ENCODE measurements at regions of chr3 and their contacts with region 1.

Region 1: DNA sequence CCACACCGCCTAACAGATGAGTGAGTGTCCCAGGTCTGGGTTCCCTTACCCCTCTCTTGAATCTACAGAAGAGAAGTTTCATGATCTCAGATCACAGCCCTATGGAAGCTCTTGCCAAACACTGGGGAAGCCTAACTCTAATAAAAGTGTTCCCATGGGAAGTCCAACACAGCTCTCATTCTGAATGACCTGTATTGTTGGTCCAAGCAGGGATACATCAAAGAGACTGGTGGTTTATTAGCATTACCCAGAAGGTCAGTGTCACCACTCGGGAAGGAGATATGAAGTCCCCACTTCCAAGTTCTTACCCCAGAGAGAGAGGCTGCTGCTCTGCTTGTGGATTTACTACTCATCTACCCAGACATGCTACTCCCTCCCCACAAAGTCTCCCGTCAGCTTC is 9.0 kb upstream of the NCBP2 start:
- DNase-seq: no peak
- H3K4me3 ChIP-seq: no peak overlapping the region
- H3K27ac ChIP-seq: no peak overlapping the region
- H3K4me1 ChIP-seq: no peaks in the 10 kb centered on the region
- H3K27me3 ChIP-seq: no peaks in the 10 kb centered on the region
- CTCF ChIP-seq: no peak
- EP300 ChIP-seq: no peak
- POLR2A ChIP-seq: no peak

Region 2: DNA sequence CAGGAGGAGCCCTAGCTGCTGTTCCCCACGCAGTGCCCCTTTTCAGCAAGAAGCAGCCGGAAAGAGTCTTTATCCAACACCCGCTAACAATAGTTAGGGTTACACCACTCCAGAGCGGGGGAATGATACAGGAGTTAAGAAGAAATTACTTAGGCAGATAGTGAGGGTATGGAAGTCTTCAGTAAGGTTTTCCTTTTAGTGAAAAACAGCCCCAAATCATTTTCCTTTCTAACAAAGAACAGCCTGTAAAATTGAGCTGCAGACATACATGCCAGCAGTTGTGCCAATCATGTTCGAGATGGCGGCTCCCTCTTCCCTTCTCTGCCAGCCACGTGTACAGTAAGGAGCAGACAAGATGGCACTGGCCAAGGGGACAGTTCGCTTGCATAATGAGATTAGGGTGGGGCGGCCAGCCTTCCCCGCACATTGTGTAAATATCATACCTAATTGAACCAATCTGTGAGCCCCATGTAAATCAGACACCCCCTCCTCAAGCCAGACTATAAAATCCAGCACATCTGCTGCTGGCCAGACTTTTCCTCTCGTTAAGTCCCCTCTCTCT is 102.1 kb before region 1 on chr3:
- in situ Hi-C with region 1: loop called in 2 of 4 experiments (anchors 10 to 25 kb)
- intact Hi-C with region 1: no loop called
- DNase-seq: no peak
- H3K4me3 ChIP-seq: no peak overlapping the region
- H3K27ac ChIP-seq: no peak overlapping the region
- H3K4me1 ChIP-seq: no peaks in the 10 kb centered on the region
- H3K27me3 ChIP-seq: no peaks in the 10 kb centered on the region
- CTCF ChIP-seq: no peak
- EP300 ChIP-seq: no peak
- POLR2A ChIP-seq: no peak